PC-9 (cell line): ENCODE measurements at regions of chr11 and their contacts with region 1.

Region 1: GRCh38 chr11:92473736-92474135 is 249.1 kb downstream of the FAT3 start:
- DNase-seq: peak in 1 of 2 experiments; percentile 17
- H3K4me3 ChIP-seq: no peak overlapping the region
- H3K27ac ChIP-seq: no peak overlapping the region
- H3K4me1 ChIP-seq: no peaks in the 10 kb centered on the region
- H3K27me3 ChIP-seq: no peaks in the 10 kb centered on the region
- CTCF ChIP-seq: no peak

Region 2: DNA sequence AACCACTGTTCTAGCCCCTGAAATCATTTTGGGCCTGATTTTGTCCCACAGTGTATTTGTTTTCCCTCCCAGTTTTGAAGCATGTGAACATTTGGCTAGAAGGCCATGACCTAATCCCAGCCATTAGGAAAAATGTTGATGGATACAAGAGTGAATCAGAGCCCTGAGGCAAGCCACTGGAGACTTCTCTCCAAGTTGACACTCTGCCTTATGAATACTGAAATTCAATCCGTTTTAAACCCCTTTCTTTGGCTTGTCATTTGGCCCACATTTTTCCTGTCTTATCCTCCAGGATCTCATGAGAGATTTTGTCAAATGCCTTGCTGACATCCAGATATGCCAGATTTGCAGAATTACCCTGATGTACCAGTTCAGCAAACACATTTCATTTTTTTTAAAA is 90.3 kb before region 1 on chr11:
- CTCF ChIA-PET with region 1: no interaction called
- POLR2A ChIA-PET with region 1: no interaction called
- intact Hi-C with region 1: loop called (anchors 10 kb)
- DNase-seq: peak; percentile 57 to 89
- H3K4me3 ChIP-seq: no peak overlapping the region
- H3K27ac ChIP-seq: peak overlapping the region; percentile 18; the same call in 1 of the 2 replicates
- H3K4me1 ChIP-seq: peaks cover 23% of the 10 kb centered on the region
- H3K27me3 ChIP-seq: no peaks in the 10 kb centered on the region
- CTCF ChIP-seq: no peak

Region 3: GRCh38 chr11:92569717-92570116 is 96.0 kb after region 1 on chr11:
- CTCF ChIA-PET with region 1: no interaction called
- POLR2A ChIA-PET with region 1: no interaction called
- intact Hi-C with region 1: no loop called
- DNase-seq: no peak
- H3K4me3 ChIP-seq: no peak overlapping the region
- H3K27ac ChIP-seq: no peak overlapping the region
- H3K4me1 ChIP-seq: no peaks in the 10 kb centered on the region
- H3K27me3 ChIP-seq: no peaks in the 10 kb centered on the region
- CTCF ChIP-seq: no peak